ENCODE measurements at regions of chr2 and their contacts with region 1.

Region 1: DNA sequence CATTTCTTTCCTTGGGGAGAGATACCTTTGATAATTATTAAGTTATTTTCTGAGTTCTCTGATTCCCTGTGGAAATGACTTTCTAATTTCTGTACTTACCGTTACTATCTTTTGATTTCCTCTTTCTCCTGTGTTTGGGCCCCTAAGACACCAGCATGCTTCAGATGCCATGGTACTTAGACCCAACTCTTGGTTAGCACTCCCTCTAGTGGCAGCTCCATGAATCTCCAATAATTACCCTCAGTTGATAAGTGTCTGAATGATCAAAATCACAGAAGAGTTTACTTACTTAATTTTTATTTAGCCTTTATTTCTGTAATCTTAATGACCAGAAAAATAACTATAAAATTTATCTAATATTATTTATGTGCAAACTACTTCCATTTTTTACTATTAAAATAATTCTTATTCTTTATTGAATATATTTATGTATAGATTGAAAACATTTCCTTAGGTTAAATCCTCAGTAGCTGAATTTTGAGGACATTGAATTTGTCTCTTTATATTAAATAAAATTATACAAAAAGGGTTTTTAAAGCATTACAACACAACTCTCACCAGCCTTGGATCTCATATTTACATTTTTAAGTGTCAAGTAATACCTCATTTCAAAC is 300.4 kb downstream of the KCNS3 start:
- DNase-seq: peak; percentile 13
- H3K4me3 Mint-ChIP-seq: no peak overlapping the region
- H3K27ac Mint-ChIP-seq: no peak overlapping the region
- H3K4me1 Mint-ChIP-seq: no peaks in the 10 kb centered on the region
- H3K27me3 Mint-ChIP-seq: peaks cover 7% of the 10 kb centered on the region

Region 2: DNA sequence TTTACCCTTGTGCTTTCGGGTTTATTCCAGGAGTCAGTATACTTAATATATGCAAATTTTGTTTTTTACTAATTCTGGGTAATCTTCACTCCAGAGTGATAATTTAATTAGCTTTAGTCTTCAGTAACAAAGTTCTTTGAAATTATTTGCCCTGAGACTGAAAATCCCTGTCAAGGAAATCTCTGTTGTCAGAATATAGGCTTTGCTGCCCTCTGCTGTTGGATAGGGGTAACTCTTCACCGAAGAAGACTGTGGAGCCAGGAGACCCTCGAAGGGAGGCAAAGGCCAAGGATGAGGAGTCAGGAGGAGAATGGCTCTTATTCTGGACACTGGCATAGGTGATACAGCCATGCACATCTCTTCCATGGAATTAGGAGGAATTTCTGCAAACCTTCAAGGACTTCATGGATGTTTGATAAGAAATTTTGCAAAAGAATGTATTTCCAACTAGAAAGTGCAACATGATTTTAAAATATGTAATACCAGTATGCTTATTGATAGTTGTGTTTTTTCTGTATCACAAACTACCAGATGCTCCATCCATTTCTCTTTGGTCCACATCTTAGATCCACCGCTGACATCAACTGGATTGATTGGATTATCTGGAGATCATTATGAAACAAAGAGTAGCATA is 199.3 kb after region 1 on chr2:
- CTCF ChIA-PET with region 1: no interaction called
- POLR2A ChIA-PET with region 1: no interaction called
- intact Hi-C with region 1: loop called (anchors 1 kb)
- DNase-seq: peak; percentile 16
- H3K4me3 Mint-ChIP-seq: no peak overlapping the region
- H3K27ac Mint-ChIP-seq: no peak overlapping the region
- H3K4me1 Mint-ChIP-seq: no peaks in the 10 kb centered on the region
- H3K27me3 Mint-ChIP-seq: peaks cover 8% of the 10 kb centered on the region